Naive thymus-derived CD4-positive, alpha-beta T cell (primary cell): ENCODE measurements at regions of chr9 and their contacts with region 1.

Region 1: GRCh38 chr9:93453047-93453914 is at the start of gene FAM120AOS:
- DNase-seq: peak; percentile 50 to 85 (median 76)
- ATAC-seq: peak; percentile 82
- H3K4me3 ChIP-seq: peak within 1 kb of the TSS; percentile 72
- H3K4me3 Mint-ChIP-seq: peak within 1 kb of the TSS; percentile 89 to 100 (median 95)
- H3K27ac ChIP-seq: peak within 1 kb of the TSS; percentile 87
- H3K27ac Mint-ChIP-seq: peak within 1 kb of the TSS; percentile 83 to 96 (median 94)
- H3K4me1 ChIP-seq: peaks cover 31 to 50% of the 10 kb centered on the region in 2 donors
- H3K4me1 Mint-ChIP-seq: peaks cover 39 to 69% (median 57%) of the 10 kb centered on the region in 7 donors
- H3K27me3 ChIP-seq: no peaks in the 10 kb centered on the region
- H3K27me3 Mint-ChIP-seq: no peaks in the 10 kb centered on the region
- total RNA-seq, gene FAM120AOS: 36.7 to 49.5 (median 42.3) TPM

Region 2: GRCh38 chr9:92325269-92325990 is 1127.9 kb before region 1 on chr9 and contains the starts of genes CENPP and NOL8:
- CTCF ChIA-PET with region 1: no interaction called
- POLR2A ChIA-PET with region 1: no interaction called
- intact Hi-C with region 1: loop called in 1 of 2 experiments (anchors 2 kb)
- DNase-seq: peak; percentile 75 to 91 (median 89)
- ATAC-seq: peak; percentile 95
- H3K4me3 ChIP-seq: peak within 1 kb of the TSS; percentile 90
- H3K4me3 Mint-ChIP-seq: peak within 1 kb of the TSS; percentile 94 to 100 (median 98)
- H3K27ac ChIP-seq: peak within 1 kb of the TSS; percentile 88
- H3K27ac Mint-ChIP-seq: peak within 1 kb of the TSS; percentile 97 to 100 (median 99)
- H3K4me1 ChIP-seq: peaks cover 11 to 12% of the 10 kb centered on the region in 2 donors
- H3K4me1 Mint-ChIP-seq: peaks cover 14 to 41% (median 35%) of the 10 kb centered on the region in 7 donors
- H3K27me3 ChIP-seq: no peaks in the 10 kb centered on the region
- H3K27me3 Mint-ChIP-seq: no peaks in the 10 kb centered on the region
- total RNA-seq, gene CENPP: 2.5 to 24.3 (median 4.1) TPM
- total RNA-seq, gene NOL8: 42.8 to 115 (median 67.2) TPM

Region 3: DNA sequence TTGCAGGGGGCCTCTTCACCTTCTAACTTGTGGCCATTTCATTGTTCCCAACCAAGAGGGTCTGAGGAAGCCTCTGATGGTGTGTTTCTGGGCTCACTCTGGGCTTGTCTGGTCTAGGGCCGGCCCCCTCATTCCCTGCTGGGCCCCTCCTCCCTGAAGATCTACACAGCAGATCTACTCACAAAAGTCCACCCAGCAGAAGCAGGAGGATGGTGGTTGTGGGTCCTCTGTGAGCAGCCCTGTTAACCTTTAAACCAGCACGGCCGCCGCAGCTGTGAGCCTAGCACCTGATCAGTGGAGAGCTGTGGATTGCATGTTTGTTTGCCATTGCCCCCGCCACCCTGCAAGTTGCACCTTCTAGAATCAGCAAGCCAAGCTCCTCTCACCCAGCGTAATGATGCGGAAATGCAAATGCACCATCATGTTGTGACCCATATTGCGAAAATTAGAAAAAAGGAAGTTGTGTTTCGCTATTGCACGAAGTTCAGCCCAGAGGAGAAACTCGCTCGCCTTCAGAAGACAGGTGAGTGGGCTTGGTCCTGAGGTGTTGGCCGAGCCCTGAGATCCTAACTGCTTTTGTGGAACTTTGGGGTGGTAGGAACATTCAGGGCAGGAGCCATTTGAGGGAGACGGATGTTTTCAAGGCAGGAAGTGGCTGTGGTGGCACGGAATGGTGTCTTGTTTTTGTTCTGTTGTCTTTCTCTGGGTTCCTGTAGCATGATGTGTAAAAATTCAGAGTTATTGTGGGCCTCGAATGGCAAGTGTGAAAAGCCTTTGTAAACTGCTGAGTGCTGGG is 489.3 kb before region 1 on chr9:
- CTCF ChIA-PET with region 1: no interaction called
- POLR2A ChIA-PET with region 1: interaction called, 4 read pairs
- intact Hi-C with region 1: loop called (anchors 2 to 5 kb)
- DNase-seq: peak; percentile 54 to 94 (median 93)
- ATAC-seq: peak; percentile 84
- H3K4me3 ChIP-seq: peak overlapping the region; percentile 85
- H3K4me3 Mint-ChIP-seq: peak overlapping the region; percentile 86 to 98 (median 93)
- H3K27ac ChIP-seq: peak overlapping the region; percentile 85
- H3K27ac Mint-ChIP-seq: peak overlapping the region; percentile 96 to 99 (median 98)
- H3K4me1 ChIP-seq: peaks cover 60 to 67% of the 10 kb centered on the region in 2 donors
- H3K4me1 Mint-ChIP-seq: peaks cover 40 to 63% (median 56%) of the 10 kb centered on the region in 7 donors
- H3K27me3 ChIP-seq: no peaks in the 10 kb centered on the region
- H3K27me3 Mint-ChIP-seq: no peaks in the 10 kb centered on the region

Region 4: DNA sequence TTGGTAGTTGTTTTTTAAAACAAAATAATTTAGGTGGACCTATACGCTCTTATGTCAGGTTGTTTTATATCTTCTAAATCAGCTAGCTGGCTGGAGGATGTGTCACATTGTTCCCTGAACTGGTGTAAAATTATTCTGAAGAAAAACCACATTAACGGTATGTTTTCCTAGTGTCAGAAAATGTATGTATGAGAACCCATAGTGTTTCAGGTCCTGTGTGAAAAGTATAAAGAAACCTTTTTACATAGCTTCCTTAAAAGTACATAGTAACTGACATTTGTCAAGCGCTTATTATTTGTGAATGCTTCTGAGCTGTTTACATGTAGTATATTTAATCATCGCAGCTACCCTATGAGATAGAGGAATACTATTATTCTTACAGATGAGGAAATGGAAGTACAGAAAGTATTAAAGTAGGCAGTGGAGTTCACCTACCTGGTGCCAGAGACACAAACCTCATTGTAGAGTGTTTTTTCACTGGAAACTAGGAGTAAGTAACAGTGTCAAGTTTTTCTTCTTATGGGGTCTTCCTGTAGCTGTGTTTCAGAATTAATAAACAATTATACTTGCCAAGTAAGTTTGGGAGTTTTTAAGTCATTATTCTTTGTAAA is 10.5 kb after region 1 on chr9:
- CTCF ChIA-PET with region 1: interaction called, 4 read pairs
- POLR2A ChIA-PET with region 1: interaction called, 13 read pairs
- intact Hi-C with region 1: loop called in 1 of 2 experiments (anchors 1 kb)
- DNase-seq: no peak
- ATAC-seq: no peak
- H3K4me3 ChIP-seq: no peak overlapping the region
- H3K4me3 Mint-ChIP-seq: peak overlapping the region in 8 of 10 donors; percentile 26 to 78 (median 56)
- H3K27ac ChIP-seq: no peak overlapping the region
- H3K27ac Mint-ChIP-seq: peak overlapping the region in 7 of 9 donors; percentile 2 to 92 (median 59)
- H3K4me1 ChIP-seq: peaks cover 27 to 50% of the 10 kb centered on the region in 2 donors
- H3K4me1 Mint-ChIP-seq: peaks cover 65 to 93% (median 88%) of the 10 kb centered on the region in 7 donors
- H3K27me3 ChIP-seq: no peaks in the 10 kb centered on the region
- H3K27me3 Mint-ChIP-seq: no peaks in the 10 kb centered on the region

Region 5: DNA sequence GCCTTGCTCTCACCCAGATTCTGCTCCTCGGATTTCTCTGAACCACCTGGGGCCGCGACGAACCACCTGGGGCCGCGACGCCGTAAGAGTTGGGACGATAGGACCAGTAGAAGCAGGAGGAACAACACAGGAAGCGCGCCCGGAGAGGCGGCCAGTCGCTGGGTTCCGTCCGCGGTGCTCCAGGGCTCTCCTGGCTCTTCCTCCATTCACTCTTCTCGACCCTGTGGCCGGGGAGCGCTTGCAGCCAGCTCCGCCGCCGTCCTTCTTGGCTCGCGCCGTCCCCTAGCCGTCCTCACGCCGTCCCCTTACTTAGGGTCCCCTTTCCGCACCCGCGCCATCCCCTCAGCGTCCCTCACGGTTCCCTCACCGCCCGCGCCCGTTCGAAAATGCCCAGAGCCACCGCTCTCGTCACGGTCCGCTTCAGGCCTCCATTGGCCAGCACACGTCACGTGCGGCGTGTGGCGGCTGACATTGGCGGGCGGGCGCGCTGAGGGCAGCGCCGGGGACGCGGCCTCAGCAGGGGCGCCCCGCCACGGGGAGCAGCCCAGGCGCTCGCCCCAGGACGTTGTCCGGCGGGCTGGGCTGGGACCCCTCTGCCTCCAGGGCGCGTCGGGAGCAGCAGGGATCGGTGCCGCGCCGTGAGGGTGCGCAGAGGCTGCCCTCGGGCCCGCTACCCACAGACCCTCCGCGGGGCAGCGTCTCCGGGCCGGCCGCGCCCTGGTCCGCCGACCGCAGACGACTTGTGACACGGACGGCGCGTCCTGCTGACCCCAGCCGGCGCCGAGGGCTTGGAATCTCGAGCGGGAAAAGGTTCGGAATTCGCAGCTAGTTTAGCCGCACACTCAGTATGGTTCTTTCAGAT is 577.3 kb after region 1 on chr9:
- CTCF ChIA-PET with region 1: no interaction called
- POLR2A ChIA-PET with region 1: no interaction called
- intact Hi-C with region 1: loop called in 1 of 2 experiments (anchors 5 kb)
- DNase-seq: peak; percentile 65 to 86 (median 75)
- ATAC-seq: peak; percentile 100
- H3K4me3 ChIP-seq: peak overlapping the region; percentile 89
- H3K4me3 Mint-ChIP-seq: peak overlapping the region; percentile 93 to 100 (median 98)
- H3K27ac ChIP-seq: peak overlapping the region; percentile 79
- H3K27ac Mint-ChIP-seq: peak overlapping the region; percentile 81 to 99 (median 94)
- H3K4me1 ChIP-seq: peaks cover 0 to 10% of the 10 kb centered on the region in 2 donors
- H3K4me1 Mint-ChIP-seq: peaks cover 10 to 44% (median 38%) of the 10 kb centered on the region in 7 donors
- H3K27me3 ChIP-seq: peaks cover 0 to 6% of the 10 kb centered on the region in 2 donors
- H3K27me3 Mint-ChIP-seq: peaks cover 0 to 15% (median 6%) of the 10 kb centered on the region in 5 donors